ENCODE measurements at regions of chr3 and their contacts with region 1.

Region 1: DNA sequence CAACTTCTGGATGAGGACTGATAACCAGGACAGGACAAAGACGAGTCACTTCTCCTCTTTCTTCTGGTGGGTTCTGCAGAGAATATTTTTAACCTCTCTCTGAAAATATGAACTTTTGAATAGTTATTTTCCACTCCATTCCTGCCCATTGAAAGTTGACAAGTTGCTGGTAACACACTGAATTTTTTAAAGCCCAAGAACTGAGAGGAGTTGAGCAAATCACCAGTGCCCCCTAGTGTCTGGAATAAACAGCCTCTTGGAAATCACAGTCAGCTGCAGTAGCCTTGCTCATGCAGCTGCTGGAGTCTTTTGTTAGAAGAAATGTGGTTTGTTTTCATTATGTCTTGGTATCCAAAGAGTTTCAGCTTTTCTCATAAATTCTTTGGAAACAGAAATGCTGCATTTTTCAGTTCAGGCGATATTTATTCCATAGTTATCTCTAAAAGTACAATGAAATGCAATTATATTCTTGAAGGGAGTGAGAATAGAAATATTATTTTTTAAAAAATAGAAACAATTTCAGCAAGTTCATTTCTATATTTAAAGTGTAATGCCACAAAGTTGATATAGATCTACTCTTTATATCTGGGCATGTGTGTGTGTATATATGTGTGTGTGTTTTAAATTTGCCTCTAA is 741.0 kb upstream of the CBLB start:
- DNase-seq: peak; percentile 21 to 66 (median 54)
- H3K4me3 ChIP-seq: no peak overlapping the region
- H3K4me3 Mint-ChIP-seq: no peak overlapping the region
- H3K27ac ChIP-seq: no peak overlapping the region
- H3K27ac Mint-ChIP-seq: peak overlapping the region in 1 of 8 donors; percentile 62
- H3K4me1 ChIP-seq: no peaks in the 10 kb centered on the region
- H3K4me1 Mint-ChIP-seq: peaks cover 3 to 7% (median 4%) of the 10 kb centered on the region in 3 donors
- H3K27me3 ChIP-seq: no peaks in the 10 kb centered on the region
- H3K27me3 Mint-ChIP-seq: no peaks in the 10 kb centered on the region

Region 2: DNA sequence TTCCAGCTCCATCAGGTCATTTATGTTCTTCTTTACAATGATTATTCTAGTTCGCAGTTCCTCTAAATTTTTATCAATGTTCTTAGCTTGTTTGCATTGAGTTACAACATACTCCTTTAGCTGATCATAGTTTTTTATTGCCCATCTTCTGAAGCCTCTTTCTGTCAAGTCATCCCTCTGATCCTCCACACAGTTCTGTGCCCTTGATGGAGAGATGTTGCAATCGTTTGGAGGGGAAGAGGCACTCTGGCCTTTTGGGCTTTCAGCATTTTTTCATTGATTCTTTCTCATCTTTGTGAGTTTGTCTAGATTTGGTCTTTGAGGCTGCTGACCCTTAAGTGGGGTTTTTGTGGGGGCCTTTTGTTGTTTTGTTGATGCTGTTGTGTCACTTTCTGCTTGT is 506.4 kb before region 1 on chr3:
- CTCF ChIA-PET with region 1: no interaction called
- POLR2A ChIA-PET with region 1: no interaction called
- DNase-seq: no peak
- H3K4me3 ChIP-seq: no peak overlapping the region
- H3K4me3 Mint-ChIP-seq: no peak overlapping the region
- H3K27ac ChIP-seq: no peak overlapping the region
- H3K27ac Mint-ChIP-seq: no peak overlapping the region
- H3K4me1 ChIP-seq: no peaks in the 10 kb centered on the region
- H3K4me1 Mint-ChIP-seq: no peaks in the 10 kb centered on the region
- H3K27me3 ChIP-seq: no peaks in the 10 kb centered on the region
- H3K27me3 Mint-ChIP-seq: no peaks in the 10 kb centered on the region

Region 3: DNA sequence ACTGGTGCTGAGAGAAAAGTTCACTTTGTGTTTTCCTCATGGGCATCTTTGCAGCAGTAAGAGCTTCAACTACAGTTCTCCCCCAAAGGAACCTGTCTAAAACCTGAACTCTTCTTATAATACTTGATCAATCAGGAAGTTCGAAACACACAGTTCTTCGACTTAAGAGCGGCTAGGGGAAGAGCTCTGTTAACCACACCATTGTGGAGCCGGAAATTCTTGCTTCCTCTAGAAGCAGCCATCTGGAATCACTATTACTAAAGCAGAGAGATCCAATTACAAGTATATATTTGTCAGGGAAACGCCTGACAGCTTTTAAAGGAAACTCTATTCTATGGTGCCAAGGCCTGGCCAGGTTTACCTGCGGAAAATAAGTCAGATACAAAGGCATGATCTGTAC is 403.6 kb before region 1 on chr3:
- CTCF ChIA-PET with region 1: no interaction called
- POLR2A ChIA-PET with region 1: interaction called, 12 read pairs
- DNase-seq: peak in 2 of 5 donors; percentile 31 to 40
- H3K4me3 ChIP-seq: peak overlapping the region; percentile 23
- H3K4me3 Mint-ChIP-seq: peak overlapping the region; percentile 54 to 79 (median 65)
- H3K27ac ChIP-seq: no peak overlapping the region
- H3K27ac Mint-ChIP-seq: peak overlapping the region; percentile 47 to 95 (median 76)
- H3K4me1 ChIP-seq: peaks cover 16% of the 10 kb centered on the region
- H3K4me1 Mint-ChIP-seq: peaks cover 39 to 48% (median 45%) of the 10 kb centered on the region in 3 donors
- H3K27me3 ChIP-seq: no peaks in the 10 kb centered on the region
- H3K27me3 Mint-ChIP-seq: peaks cover 0 to 2% of the 10 kb centered on the region in 2 donors